Activated CD4-positive, alpha-beta memory T cell treated with anti-CD3 and anti-CD28 coated beads, Interleukin-2, amount 10 ng/mL, durations not matched to agents 7 days and 5 days (primary cell): ENCODE measurements at regions of chr6 and their contacts with region 1.

Region 1: GRCh38 chr6:156776840-156777576 is at the start of gene ARID1B:
- DNase-seq: peak; percentile 81
- H3K4me3 Mint-ChIP-seq: peak within 1 kb of the TSS; percentile 85
- H3K27ac Mint-ChIP-seq: peak within 1 kb of the TSS; percentile 98
- H3K4me1 Mint-ChIP-seq: peaks cover 26% of the 10 kb centered on the region
- H3K27me3 Mint-ChIP-seq: no peaks in the 10 kb centered on the region
- total RNA-seq, gene ARID1B: 63.4 to 65.5 TPM

Region 2: GRCh38 chr6:156686995-156687788 is 89.8 kb before region 1 on chr6:
- CTCF ChIA-PET with region 1: interaction called, 3 read pairs
- POLR2A ChIA-PET with region 1: interaction called, 45 read pairs
- DNase-seq: peak; percentile 75
- H3K4me3 Mint-ChIP-seq: peak overlapping the region; percentile 89
- H3K27ac Mint-ChIP-seq: peak overlapping the region; percentile 85
- H3K4me1 Mint-ChIP-seq: peaks cover 18% of the 10 kb centered on the region
- H3K27me3 Mint-ChIP-seq: peaks cover 9% of the 10 kb centered on the region

Region 3: DNA sequence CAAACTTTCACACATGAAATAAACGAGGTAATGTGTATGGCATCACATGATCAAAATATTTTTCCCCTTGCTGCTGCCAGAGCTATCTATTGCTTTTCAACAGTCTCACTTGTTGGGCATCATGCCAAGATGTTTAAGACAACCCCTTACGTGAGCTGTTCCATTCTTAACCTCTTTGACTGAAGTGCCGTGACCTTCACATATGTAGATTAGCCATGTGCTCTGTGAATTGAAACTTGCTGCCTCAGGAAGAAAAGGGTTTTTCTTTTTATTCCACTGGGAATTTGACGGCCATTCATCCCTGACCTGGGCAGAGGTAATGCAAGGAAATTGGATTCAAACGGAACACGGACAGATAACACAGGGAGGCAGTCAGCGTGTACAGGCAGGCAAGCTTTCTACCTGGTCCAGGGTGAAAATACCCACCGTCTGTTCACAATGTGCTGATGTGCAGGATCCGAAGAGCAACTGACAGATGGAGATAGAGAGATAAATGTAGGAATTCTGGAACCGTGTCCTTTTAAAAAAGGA is 14.4 kb after region 1 on chr6:
- CTCF ChIA-PET with region 1: interaction called, 5 read pairs
- POLR2A ChIA-PET with region 1: interaction called, 11 read pairs
- DNase-seq: no peak
- H3K4me3 Mint-ChIP-seq: no peak overlapping the region
- H3K27ac Mint-ChIP-seq: no peak overlapping the region
- H3K4me1 Mint-ChIP-seq: peaks cover 48% of the 10 kb centered on the region
- H3K27me3 Mint-ChIP-seq: no peaks in the 10 kb centered on the region

Region 4: GRCh38 chr6:157021344-157021992 is 244.5 kb after region 1 on chr6:
- CTCF ChIA-PET with region 1: interaction called, 4 read pairs
- POLR2A ChIA-PET with region 1: interaction called, 78 read pairs
- DNase-seq: peak; percentile 93
- H3K4me3 Mint-ChIP-seq: peak overlapping the region; percentile 90
- H3K27ac Mint-ChIP-seq: peak overlapping the region; percentile 100
- H3K4me1 Mint-ChIP-seq: peaks cover 52% of the 10 kb centered on the region
- H3K27me3 Mint-ChIP-seq: no peaks in the 10 kb centered on the region